B cell (primary cell): ENCODE measurements at regions of chr10 and their contacts with region 1.

Region 1: GRCh38 chr10:102678842-102679289 is 34.6 kb downstream of the TRIM8 start:
- DNase-seq: peak; percentile 33
- ATAC-seq: peak; percentile 48
- H3K4me3 ChIP-seq: no peak overlapping the region
- H3K4me3 Mint-ChIP-seq: no peak overlapping the region
- H3K27ac ChIP-seq: peak overlapping the region in 1 of 2 donors; percentile 2
- H3K27ac Mint-ChIP-seq: no peak overlapping the region
- H3K4me1 ChIP-seq: peaks cover 24 to 27% of the 10 kb centered on the region in 2 donors
- H3K4me1 Mint-ChIP-seq: peaks cover 33% of the 10 kb centered on the region
- H3K27me3 ChIP-seq: no peaks in the 10 kb centered on the region
- H3K27me3 Mint-ChIP-seq: no peaks in the 10 kb centered on the region
- CTCF ChIP-seq: no peak

Region 2: DNA sequence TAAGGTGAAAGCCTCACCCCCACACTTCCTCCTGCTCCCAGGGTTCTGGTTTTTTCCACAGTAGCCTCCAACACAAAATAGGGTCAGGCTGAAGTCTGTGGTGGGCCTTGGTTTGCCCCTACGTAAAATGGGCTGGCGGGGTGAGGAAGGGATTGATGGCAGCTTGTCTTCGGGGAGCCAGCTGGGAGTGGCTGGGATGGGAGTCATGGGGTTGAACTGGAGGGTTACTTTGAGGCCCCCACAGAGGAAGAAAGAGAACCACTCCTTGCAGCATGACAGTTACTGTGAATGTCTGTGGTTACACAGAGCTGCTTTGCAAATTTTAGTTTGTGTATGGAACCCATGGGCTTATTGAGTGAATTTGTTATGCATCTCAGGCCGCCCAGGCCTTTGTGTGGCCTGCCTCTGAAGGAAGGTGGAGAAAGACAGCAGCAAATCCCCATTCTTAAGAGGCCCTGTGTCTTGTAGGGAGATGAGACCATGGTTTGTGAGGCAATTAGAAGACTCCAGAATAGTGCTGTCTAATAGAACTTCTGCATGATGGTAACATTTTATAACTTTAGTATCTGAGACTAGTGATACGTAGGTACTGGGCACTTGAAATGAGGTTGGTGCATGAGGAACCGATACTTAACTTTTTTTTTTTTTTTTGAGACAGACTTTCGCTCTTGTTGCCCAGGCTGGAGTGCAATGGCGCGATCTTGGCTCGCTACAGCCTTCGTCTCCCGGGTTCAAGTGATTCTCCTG is 26.5 kb before region 1 on chr10:
- CTCF ChIA-PET with region 1: interaction called, 14 read pairs
- POLR2A ChIA-PET with region 1: no interaction called
- intact Hi-C with region 1: no loop called
- DNase-seq: peak; percentile 76
- ATAC-seq: peak; percentile 54
- H3K4me3 ChIP-seq: peak overlapping the region in 2 of 5 experiments; percentile 23 to 35
- H3K4me3 Mint-ChIP-seq: peak overlapping the region; percentile 90
- H3K27ac ChIP-seq: peak overlapping the region; percentile 70 to 90
- H3K27ac Mint-ChIP-seq: peak overlapping the region; percentile 98
- H3K4me1 ChIP-seq: peaks cover 64 to 67% of the 10 kb centered on the region in 2 donors
- H3K4me1 Mint-ChIP-seq: peaks cover 71% of the 10 kb centered on the region
- H3K27me3 ChIP-seq: no peaks in the 10 kb centered on the region
- H3K27me3 Mint-ChIP-seq: no peaks in the 10 kb centered on the region
- CTCF ChIP-seq: no peak

Region 3: DNA sequence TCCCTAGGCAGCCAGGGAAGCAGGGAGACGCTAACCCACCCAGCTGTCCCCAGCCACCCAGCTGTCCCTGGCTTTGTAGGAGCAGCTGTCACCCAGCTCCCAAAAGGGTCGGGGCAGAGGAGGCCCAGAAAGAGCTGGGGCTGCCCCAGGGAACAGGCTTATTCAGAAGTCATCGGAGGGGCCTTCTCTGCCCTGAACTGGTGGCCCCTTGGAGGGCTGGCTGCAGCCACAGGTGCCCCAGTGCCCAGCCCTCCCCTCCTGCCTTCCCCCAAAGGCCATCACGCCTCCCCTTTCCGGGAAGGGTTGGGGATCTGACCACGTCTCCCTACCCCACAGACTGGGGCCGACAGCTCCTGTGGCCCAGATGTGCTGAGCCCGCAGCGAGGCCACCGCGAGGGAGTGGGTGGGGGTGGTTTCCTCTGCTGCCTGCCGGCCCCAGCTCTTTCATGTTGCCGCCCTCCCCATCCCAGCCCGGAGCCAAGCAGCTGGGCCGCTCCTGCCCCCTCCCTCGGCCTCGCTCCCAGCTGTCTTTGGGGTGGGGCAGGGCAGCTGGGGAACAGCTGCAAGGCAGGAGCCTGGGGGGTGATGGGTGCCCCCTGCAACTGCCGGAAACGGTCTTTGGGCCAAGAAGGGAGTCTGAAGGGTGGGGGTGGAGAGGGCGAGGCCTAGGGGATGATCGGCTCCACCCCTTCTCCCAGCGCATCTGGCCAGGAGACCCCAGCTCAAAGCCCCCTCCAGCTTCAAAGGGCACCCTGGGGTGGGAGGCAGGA is 17.8 kb before region 1 on chr10:
- CTCF ChIA-PET with region 1: interaction called, 7 read pairs
- POLR2A ChIA-PET with region 1: interaction called, 10 read pairs
- intact Hi-C with region 1: no loop called
- DNase-seq: peak; percentile 43
- ATAC-seq: peak; percentile 66
- H3K4me3 ChIP-seq: peak overlapping the region in 2 of 5 experiments; percentile 8 to 12
- H3K4me3 Mint-ChIP-seq: peak overlapping the region; percentile 49
- H3K27ac ChIP-seq: peak overlapping the region in 1 of 2 donors; percentile 23
- H3K27ac Mint-ChIP-seq: peak overlapping the region; percentile 56
- H3K4me1 ChIP-seq: peaks cover 12 to 15% of the 10 kb centered on the region in 2 donors
- H3K4me1 Mint-ChIP-seq: peaks cover 16% of the 10 kb centered on the region
- H3K27me3 ChIP-seq: no peaks in the 10 kb centered on the region
- H3K27me3 Mint-ChIP-seq: no peaks in the 10 kb centered on the region
- CTCF ChIP-seq: no peak

Region 4: GRCh38 chr10:102831322-102832071 is 152.6 kb after region 1 on chr10:
- CTCF ChIA-PET with region 1: no interaction called
- POLR2A ChIA-PET with region 1: no interaction called
- intact Hi-C with region 1: no loop called
- DNase-seq: no peak
- ATAC-seq: no peak
- H3K4me3 ChIP-seq: no peak overlapping the region
- H3K4me3 Mint-ChIP-seq: no peak overlapping the region
- H3K27ac ChIP-seq: no peak overlapping the region
- H3K27ac Mint-ChIP-seq: no peak overlapping the region
- H3K4me1 ChIP-seq: peaks cover 0 to 4% of the 10 kb centered on the region in 2 donors
- H3K4me1 Mint-ChIP-seq: peaks cover 2% of the 10 kb centered on the region
- H3K27me3 ChIP-seq: peaks cover 0 to 11% (median 2%) of the 10 kb centered on the region in 4 experiments
- H3K27me3 Mint-ChIP-seq: no peaks in the 10 kb centered on the region
- CTCF ChIP-seq: no peak

Region 5: DNA sequence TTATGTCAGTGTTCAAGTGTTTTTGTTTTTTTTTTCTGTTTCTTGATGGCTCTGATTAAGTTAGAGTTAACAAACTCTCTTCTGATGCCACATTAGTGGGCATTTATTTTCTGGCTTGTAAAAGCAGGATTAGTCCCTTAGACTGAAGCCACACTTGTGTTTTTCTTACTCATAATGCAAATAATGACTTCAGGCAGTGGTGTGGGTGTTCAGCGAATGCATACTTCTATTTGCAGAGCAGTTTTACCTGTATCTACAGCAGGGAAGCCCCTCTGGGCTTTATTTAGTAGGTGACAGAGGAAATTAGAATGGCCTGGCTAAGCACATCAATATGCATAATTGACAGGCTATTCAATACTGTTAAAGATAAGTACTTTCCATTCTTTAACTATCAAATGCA is 319.1 kb after region 1 on chr10:
- CTCF ChIA-PET with region 1: no interaction called
- POLR2A ChIA-PET with region 1: no interaction called
- intact Hi-C with region 1: no loop called
- DNase-seq: no peak
- ATAC-seq: no peak
- H3K4me3 ChIP-seq: no peak overlapping the region
- H3K4me3 Mint-ChIP-seq: no peak overlapping the region
- H3K27ac ChIP-seq: no peak overlapping the region
- H3K27ac Mint-ChIP-seq: no peak overlapping the region
- H3K4me1 ChIP-seq: no peaks in the 10 kb centered on the region
- H3K4me1 Mint-ChIP-seq: peaks cover 3% of the 10 kb centered on the region
- H3K27me3 ChIP-seq: no peaks in the 10 kb centered on the region
- H3K27me3 Mint-ChIP-seq: no peaks in the 10 kb centered on the region
- CTCF ChIP-seq: no peak